ENCODE measurements at regions of chr21 and their contacts with region 1.

Region 1: DNA sequence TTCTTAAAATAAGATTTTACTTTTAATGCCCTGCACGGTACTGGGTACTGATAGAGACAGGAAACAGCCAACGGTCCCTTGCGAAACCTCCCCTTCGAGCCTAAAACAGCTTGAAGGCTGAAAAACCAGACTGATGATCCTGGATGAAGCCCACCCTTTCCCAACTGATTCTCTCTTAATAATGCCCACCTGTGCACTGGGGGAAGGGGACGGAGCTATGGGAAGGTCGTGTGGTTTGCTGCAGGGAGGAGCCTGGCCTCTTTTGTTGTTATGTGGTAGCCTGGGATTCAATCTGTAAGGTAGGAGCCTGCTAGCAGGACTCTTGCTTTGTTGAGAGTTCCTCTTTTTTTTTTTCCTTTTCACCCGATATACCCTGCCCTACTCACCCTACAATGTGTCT is 25.6 kb downstream of the SAMSN1 start:
- DNase-seq: peak; percentile 46 to 84 (median 77)
- H3K4me3 ChIP-seq: peak overlapping the region in 6 of 7 experiments; percentile 16 to 71 (median 52)
- H3K27ac ChIP-seq: peak overlapping the region; percentile 59 to 84
- H3K4me1 ChIP-seq: peaks cover 18 to 63% (median 45%) of the 10 kb centered on the region in 4 experiments
- H3K27me3 ChIP-seq: no peaks in the 10 kb centered on the region

Region 2: GRCh38 chr21:14533504-14534428 is 13.2 kb after region 1 on chr21:
- CTCF ChIA-PET with region 1: interaction called, 10 read pairs
- POLR2A ChIA-PET with region 1: no interaction called
- DNase-seq: peak; percentile 29 to 61 (median 51)
- H3K4me3 ChIP-seq: no peak overlapping the region
- H3K27ac ChIP-seq: no peak overlapping the region
- H3K4me1 ChIP-seq: peaks cover 3 to 7% (median 5%) of the 10 kb centered on the region in 4 experiments
- H3K27me3 ChIP-seq: no peaks in the 10 kb centered on the region

Region 3: GRCh38 chr21:14712121-14712723 is 191.7 kb after region 1 on chr21:
- CTCF ChIA-PET with region 1: no interaction called
- POLR2A ChIA-PET with region 1: no interaction called
- DNase-seq: no peak
- H3K4me3 ChIP-seq: no peak overlapping the region
- H3K27ac ChIP-seq: no peak overlapping the region
- H3K4me1 ChIP-seq: no peaks in the 10 kb centered on the region
- H3K27me3 ChIP-seq: no peaks in the 10 kb centered on the region

Measured in common myeloid progenitor, CD34-positive (primary cell).